Activated B cell treated with CpG ODN at 0.5 μM for 24 hours (primary cell): ENCODE measurements at regions of chr16 and their contacts with region 1.

Region 1: DNA sequence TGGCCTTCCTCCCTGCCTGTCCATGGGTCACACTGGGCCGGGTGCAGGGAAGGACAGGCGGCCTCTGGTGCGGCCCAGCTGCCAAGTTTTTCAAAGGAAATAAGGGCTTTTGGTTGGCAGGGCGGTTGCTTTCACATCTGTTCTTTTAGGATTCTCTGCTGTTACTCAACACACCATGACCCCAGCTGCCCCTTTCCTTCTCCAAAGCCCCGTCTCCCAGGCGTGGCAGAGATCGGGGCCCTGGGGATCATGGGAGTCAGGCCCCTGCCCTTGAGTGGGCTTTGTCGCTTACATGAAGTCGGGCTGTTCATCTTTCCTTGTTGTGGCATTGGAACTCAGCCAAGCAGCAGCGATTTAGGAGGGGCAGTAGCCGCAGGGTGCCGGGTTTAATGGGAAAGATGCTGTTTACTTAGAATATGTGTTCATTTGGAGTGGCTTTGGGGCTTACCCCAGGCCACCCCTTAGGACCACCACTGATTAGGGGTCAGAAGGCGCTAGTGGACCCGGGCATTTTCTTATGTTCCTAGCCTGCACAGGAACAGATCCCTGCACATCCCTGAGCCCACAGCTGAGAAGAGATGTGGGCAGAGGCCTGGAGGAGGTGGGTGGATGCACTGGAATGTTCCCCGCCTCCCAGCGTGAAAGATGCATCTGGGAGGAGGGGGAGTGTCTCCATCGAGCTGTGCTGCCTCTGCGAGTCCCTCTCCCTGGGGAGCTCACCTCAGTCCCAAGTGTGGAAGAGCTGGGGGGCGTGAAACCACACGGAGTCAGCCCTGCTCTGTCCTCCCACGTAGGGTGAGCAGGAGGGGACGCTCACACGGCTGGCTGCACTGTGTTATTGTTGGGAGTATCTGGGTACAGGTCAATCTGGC is 6.8 kb upstream of the ADCY7 start:
- DNase-seq: no peak
- ATAC-seq: no peak
- H3K4me3 Mint-ChIP-seq: no peak overlapping the region
- H3K27ac Mint-ChIP-seq: no peak overlapping the region
- H3K4me1 Mint-ChIP-seq: peaks cover 17% of the 10 kb centered on the region
- H3K27me3 Mint-ChIP-seq: peaks cover 3% of the 10 kb centered on the region
- CTCF ChIP-seq: no peak

Region 2: GRCh38 chr16:50273681-50274325 is 14.2 kb after region 1 on chr16:
- CTCF ChIA-PET with region 1: interaction called, 10 read pairs
- POLR2A ChIA-PET with region 1: interaction called, 244 read pairs
- intact Hi-C with region 1: no loop called
- DNase-seq: no peak
- ATAC-seq: peak; percentile 82
- H3K4me3 Mint-ChIP-seq: peak overlapping the region; percentile 99
- H3K27ac Mint-ChIP-seq: peak overlapping the region; percentile 100
- H3K4me1 Mint-ChIP-seq: peaks cover 92% of the 10 kb centered on the region
- H3K27me3 Mint-ChIP-seq: no peaks in the 10 kb centered on the region
- CTCF ChIP-seq: no peak